Naive thymus-derived CD4-positive, alpha-beta T cell (primary cell): ENCODE measurements at regions of chr3 and their contacts with region 1.

Region 1: GRCh38 chr3:180601688-180602666 is at the start of gene TTC14:
- DNase-seq: peak; percentile 80 to 94 (median 92)
- ATAC-seq: peak; percentile 94
- H3K4me3 ChIP-seq: peak within 1 kb of the TSS; percentile 92
- H3K4me3 Mint-ChIP-seq: peak within 1 kb of the TSS; percentile 88 to 98 (median 96)
- H3K27ac ChIP-seq: peak within 1 kb of the TSS; percentile 88
- H3K27ac Mint-ChIP-seq: peak within 1 kb of the TSS; percentile 92 to 99 (median 97)
- H3K4me1 ChIP-seq: peaks cover 12% of the 10 kb centered on the region in 2 donors
- H3K4me1 Mint-ChIP-seq: peaks cover 14 to 47% (median 39%) of the 10 kb centered on the region in 7 donors
- H3K27me3 ChIP-seq: no peaks in the 10 kb centered on the region
- H3K27me3 Mint-ChIP-seq: peaks cover 4 to 23% (median 18%) of the 10 kb centered on the region in 5 donors
- total RNA-seq, gene TTC14: 76.5 to 201 (median 103) TPM

Region 2: DNA sequence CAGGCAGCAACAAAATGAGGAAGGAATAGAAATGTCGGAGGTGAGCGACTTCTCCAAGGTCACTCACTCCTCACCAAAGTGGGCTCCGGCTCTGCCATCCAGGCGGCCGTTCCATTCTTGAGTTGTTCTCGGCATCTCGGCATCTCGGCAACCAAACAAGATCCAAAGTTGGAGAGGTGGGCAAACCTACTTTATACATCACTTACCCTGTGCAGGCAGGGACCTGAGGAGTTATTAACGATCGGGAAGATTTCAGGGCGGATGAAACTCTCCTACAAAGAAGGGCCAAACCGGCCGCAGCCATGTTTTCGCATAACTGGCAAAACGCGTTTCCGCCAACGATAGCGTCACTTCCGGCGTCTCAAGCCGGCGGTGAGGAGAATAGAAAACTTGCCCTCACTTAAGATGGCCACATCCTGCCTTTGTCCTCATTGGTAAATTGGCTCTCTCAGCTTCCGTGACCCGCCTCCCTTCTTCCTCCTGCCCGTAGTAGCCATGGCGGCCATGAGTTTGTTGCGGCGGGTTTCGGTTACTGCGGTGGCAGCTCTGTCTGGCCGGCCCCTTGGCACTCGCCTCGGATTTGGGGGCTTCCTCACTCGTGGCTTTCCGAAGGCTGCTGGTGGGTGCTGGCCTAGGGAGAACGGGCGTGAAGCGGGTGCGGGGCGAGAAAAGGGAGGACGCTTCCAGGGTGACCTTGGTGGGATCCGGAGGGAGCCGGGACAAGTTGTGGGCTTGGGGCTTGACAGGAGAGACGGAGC is 997.5 kb before region 1 on chr3 and contains the starts of genes MRPL47 and NDUFB5:
- CTCF ChIA-PET with region 1: interaction called, 4 read pairs
- POLR2A ChIA-PET with region 1: interaction called, 4 read pairs
- intact Hi-C with region 1: loop called (anchors 1 kb)
- DNase-seq: peak; percentile 76 to 95 (median 92)
- ATAC-seq: peak; percentile 100
- H3K4me3 ChIP-seq: peak within 1 kb of the TSS; percentile 95
- H3K4me3 Mint-ChIP-seq: peak within 1 kb of the TSS; percentile 95 to 99 (median 99)
- H3K27ac ChIP-seq: peak within 1 kb of the TSS; percentile 90
- H3K27ac Mint-ChIP-seq: peak within 1 kb of the TSS; percentile 98 to 100 (median 99)
- H3K4me1 ChIP-seq: peaks cover 15 to 25% of the 10 kb centered on the region in 2 donors
- H3K4me1 Mint-ChIP-seq: peaks cover 23 to 65% (median 46%) of the 10 kb centered on the region in 7 donors
- H3K27me3 ChIP-seq: no peaks in the 10 kb centered on the region
- H3K27me3 Mint-ChIP-seq: no peaks in the 10 kb centered on the region
- total RNA-seq, gene MRPL47: 14.4 to 41.4 (median 18.5) TPM
- total RNA-seq, gene NDUFB5: 33.4 to 80.2 (median 62.8) TPM

Region 3: DNA sequence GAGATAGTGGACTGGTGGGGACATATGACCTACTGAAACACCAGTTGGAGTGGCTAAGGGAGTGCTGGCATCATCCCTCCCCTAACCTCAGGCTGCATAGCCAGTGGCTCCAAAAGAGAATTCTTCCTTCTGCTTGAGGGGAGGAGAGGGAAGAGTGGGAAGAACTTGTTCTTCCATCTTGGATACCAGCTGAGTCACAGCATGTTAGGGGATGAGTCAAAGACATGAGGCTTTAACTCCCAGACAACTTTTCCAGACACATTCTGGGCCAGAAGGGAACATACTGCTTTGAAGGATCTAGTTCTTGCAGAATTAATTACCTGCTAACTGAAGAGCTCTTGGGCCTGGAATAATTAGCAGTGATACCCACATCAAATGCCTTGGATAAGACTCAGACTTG is 528.4 kb before region 1 on chr3:
- CTCF ChIA-PET with region 1: no interaction called
- POLR2A ChIA-PET with region 1: no interaction called
- intact Hi-C with region 1: no loop called
- DNase-seq: no peak
- ATAC-seq: no peak
- H3K4me3 ChIP-seq: no peak overlapping the region
- H3K4me3 Mint-ChIP-seq: no peak overlapping the region
- H3K27ac ChIP-seq: no peak overlapping the region
- H3K27ac Mint-ChIP-seq: no peak overlapping the region
- H3K4me1 ChIP-seq: no peaks in the 10 kb centered on the region
- H3K4me1 Mint-ChIP-seq: no peaks in the 10 kb centered on the region
- H3K27me3 ChIP-seq: no peaks in the 10 kb centered on the region
- H3K27me3 Mint-ChIP-seq: peaks cover 0 to 9% (median 0%) of the 10 kb centered on the region in 5 donors

Region 4: DNA sequence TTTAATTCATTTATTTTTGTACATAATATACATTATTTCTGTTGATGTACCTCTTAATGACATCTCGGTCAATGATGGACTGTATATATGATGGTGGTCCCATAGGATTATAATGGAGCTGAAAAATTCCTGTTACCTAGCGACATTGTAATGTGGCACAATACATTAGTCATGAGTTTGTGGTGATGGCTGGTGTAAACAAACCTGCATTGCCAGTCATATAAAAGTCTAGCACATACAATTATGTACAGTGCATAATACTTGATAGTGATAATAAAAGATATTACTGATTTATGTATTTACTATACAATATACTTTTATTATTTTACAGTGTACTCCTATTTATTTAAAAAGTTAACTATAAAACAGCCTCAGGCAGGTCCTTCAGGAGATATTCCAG is 15.1 kb after region 1 on chr3:
- CTCF ChIA-PET with region 1: no interaction called
- POLR2A ChIA-PET with region 1: interaction called, 13 read pairs
- intact Hi-C with region 1: loop called in 1 of 2 experiments (anchors 2 kb)
- DNase-seq: no peak
- ATAC-seq: no peak
- H3K4me3 ChIP-seq: no peak overlapping the region
- H3K4me3 Mint-ChIP-seq: no peak overlapping the region
- H3K27ac ChIP-seq: no peak overlapping the region
- H3K27ac Mint-ChIP-seq: no peak overlapping the region
- H3K4me1 ChIP-seq: no peaks in the 10 kb centered on the region
- H3K4me1 Mint-ChIP-seq: peaks cover 0 to 4% (median 0%) of the 10 kb centered on the region in 7 donors
- H3K27me3 ChIP-seq: no peaks in the 10 kb centered on the region
- H3K27me3 Mint-ChIP-seq: no peaks in the 10 kb centered on the region

Region 5: GRCh38 chr3:180626844-180627243 is 24.9 kb after region 1 on chr3:
- CTCF ChIA-PET with region 1: no interaction called
- POLR2A ChIA-PET with region 1: no interaction called
- intact Hi-C with region 1: loop called in 1 of 2 experiments (anchors 2 kb)
- DNase-seq: no peak
- ATAC-seq: no peak
- H3K4me3 ChIP-seq: no peak overlapping the region
- H3K4me3 Mint-ChIP-seq: no peak overlapping the region
- H3K27ac ChIP-seq: no peak overlapping the region
- H3K27ac Mint-ChIP-seq: no peak overlapping the region
- H3K4me1 ChIP-seq: no peaks in the 10 kb centered on the region
- H3K4me1 Mint-ChIP-seq: peaks cover 8 to 34% (median 20%) of the 10 kb centered on the region in 7 donors
- H3K27me3 ChIP-seq: no peaks in the 10 kb centered on the region
- H3K27me3 Mint-ChIP-seq: no peaks in the 10 kb centered on the region

Region 6: DNA sequence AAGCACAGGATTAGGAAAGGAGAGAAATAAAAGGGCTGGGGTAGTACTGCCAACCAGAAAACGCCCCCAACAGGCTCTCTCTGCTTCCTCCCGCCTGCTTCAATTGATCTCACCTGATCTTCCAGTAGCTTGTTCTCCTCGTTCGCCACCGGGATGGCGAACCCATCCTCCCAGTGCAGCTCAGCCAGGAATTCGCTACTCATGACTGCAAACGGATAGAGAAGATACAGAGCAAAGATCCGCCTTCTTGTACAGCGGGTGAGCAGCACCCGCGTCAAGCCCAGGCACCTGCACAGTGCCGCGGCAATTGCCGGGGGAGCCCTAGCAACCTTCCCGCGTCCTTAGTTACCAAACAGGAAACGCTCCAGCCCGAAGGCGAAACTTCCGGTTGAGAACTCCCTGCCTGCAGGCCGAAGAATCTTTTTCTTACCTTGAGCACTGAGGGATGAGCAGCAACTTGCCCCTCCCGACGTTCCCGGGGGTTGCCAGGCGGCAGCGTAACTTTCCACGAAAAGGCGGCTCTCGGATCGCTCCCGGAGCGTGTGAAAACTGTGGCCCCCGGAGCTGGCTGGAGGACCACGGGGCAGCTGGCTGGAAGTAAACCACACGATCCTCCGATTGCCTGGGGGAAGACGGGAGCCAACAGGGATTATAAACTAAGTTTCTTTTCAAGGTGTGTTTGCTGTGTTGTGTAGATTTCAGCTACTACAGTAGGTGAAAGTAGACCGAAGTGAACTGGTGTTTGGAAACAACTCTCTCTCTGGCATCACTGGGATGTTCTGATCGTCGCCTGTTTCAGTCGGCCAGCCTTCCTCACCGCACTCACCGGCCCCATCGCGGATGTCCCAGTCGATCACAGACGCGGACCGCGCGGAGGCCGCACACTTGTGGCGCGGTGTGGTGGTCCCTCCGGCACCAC is 77.5 kb after region 1 on chr3 and contains the start of gene CCDC39:
- CTCF ChIA-PET with region 1: interaction called, 5 read pairs
- POLR2A ChIA-PET with region 1: interaction called, 5 read pairs
- intact Hi-C with region 1: loop called (anchors 1 to 5 kb)
- DNase-seq: peak; percentile 12 to 62 (median 47)
- ATAC-seq: peak; percentile 80
- H3K4me3 ChIP-seq: peak within 1 kb of the TSS; percentile 72
- H3K4me3 Mint-ChIP-seq: peak within 1 kb of the TSS; percentile 84 to 94 (median 89)
- H3K27ac ChIP-seq: peak within 1 kb of the TSS; percentile 49
- H3K27ac Mint-ChIP-seq: peak within 1 kb of the TSS in 8 of 9 donors; percentile 21 to 80 (median 68)
- H3K4me1 ChIP-seq: peaks cover 9 to 12% of the 10 kb centered on the region in 2 donors
- H3K4me1 Mint-ChIP-seq: peaks cover 14 to 25% (median 18%) of the 10 kb centered on the region in 7 donors
- H3K27me3 ChIP-seq: peaks cover 0 to 3% of the 10 kb centered on the region in 2 donors
- H3K27me3 Mint-ChIP-seq: peaks cover 45 to 66% (median 57%) of the 10 kb centered on the region in 5 donors
- total RNA-seq, gene CCDC39: not detected

Region 7: GRCh38 chr3:180989291-180990163 is 387.6 kb after region 1 on chr3 and contains the start of gene DNAJC19:
- CTCF ChIA-PET with region 1: no interaction called
- POLR2A ChIA-PET with region 1: interaction called, 8 read pairs
- intact Hi-C with region 1: loop called (anchors 1 kb)
- DNase-seq: peak; percentile 69 to 94 (median 93)
- ATAC-seq: peak; percentile 99
- H3K4me3 ChIP-seq: peak within 1 kb of the TSS; percentile 78
- H3K4me3 Mint-ChIP-seq: peak within 1 kb of the TSS; percentile 91 to 99 (median 97)
- H3K27ac ChIP-seq: peak within 1 kb of the TSS; percentile 80
- H3K27ac Mint-ChIP-seq: peak within 1 kb of the TSS; percentile 90 to 99 (median 96)
- H3K4me1 ChIP-seq: peaks cover 15 to 23% of the 10 kb centered on the region in 2 donors
- H3K4me1 Mint-ChIP-seq: peaks cover 15 to 58% (median 44%) of the 10 kb centered on the region in 7 donors
- H3K27me3 ChIP-seq: no peaks in the 10 kb centered on the region
- H3K27me3 Mint-ChIP-seq: peaks cover 0 to 7% (median 0%) of the 10 kb centered on the region in 5 donors
- total RNA-seq, gene DNAJC19: 20.7 to 74.1 (median 40.2) TPM